ENCODE measurements at regions of chr7 and their contacts with region 1.

Region 1: DNA sequence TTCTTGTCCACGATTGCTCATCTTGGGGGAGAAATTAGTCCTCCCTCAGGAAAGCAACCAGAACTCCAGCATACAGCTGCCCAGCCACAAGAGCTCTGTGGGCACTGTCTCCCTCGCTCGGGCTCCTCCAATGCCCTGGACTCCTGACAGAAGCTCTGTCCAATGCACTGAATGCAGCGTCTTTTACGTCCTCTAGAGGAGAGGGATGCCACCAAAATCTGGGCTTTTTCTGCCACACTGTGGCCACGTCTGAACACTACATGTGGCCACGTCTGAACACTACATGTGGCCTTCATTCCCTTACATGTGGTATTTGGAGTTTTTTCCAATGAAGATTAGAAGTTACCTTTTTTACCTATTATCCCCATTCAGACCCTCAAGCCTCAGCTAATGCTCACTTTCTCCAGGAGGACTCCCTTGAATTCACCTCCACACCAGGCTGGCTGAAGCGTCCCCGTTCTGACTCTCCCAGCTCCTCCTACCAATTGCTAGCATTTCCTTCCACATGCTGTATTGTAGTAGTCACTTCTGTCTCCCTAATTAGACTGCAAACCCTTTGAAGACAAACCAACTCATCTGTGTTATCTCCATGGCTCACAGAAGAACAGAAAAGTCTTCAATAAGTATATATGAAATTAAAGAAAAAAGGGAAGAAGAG is 134.3 kb upstream of the PDE1C start:
- DNase-seq: peak; percentile 66

Region 2: DNA sequence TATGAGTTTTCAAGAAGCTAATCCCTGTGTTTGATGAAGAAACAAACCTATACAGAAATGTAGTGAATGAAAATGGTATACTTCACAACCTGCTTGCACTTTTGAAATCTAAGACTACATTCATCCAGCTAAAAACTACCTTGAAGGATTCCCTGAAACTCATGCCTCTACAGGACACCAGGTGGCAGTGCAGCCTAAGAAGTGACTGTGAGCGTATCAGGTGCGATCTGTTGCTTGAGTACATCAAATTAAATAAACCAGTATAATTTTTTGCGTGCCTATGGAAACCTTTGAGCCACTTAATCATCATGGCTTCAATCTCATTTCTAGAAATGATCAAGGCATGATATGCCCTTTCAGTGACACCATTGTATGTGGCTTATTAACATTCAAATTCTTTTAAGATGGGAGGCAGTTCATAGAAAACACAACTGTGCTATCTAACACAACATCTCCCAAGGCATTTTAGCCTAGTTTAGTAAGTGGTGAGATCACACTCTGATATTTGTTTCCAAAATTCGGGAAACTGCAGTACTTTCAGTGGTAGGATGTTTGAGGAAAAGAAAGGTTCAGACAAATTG is 460.1 kb before region 1 on chr7:
- in situ Hi-C with region 1: loop called (anchors 25 kb)
- DNase-seq: peak; percentile 64

Region 3: DNA sequence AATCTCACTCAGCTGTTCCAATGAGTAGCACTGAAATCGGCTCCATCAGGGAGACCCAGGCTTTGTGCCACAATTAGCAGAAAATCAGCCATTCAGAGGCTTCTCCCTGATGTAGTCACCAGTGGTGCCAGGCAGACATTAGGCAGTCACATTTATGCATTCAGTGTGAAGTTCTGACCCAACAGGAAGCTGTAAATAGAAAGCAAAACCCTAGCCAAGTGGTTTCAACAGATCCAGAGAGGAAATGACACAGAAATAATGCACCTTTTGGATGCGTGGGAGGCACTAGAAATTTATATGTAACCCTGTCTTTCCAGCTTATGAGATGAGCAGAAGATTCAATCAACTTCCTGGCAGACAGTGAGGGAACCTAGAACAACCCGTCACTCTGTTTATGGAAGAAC is 320.7 kb before region 1 on chr7:
- in situ Hi-C with region 1: no loop called
- DNase-seq: peak; percentile 84

Measured in KBM-7 (cell line).